ENCODE measurements at regions of chr19 and their contacts with region 1.

Region 1: GRCh38 chr19:1113033-1113985 is 9.5 kb downstream of the GPX4 start:
- DNase-seq: peak; percentile 98
- H3K4me3 ChIP-seq: peak overlapping the region in 2 of 4 donors; percentile 5 to 18
- H3K27ac ChIP-seq: peak overlapping the region; percentile 78 to 82 (median 80)
- H3K4me1 ChIP-seq: peaks cover 15 to 28% (median 26%) of the 10 kb centered on the region in 4 donors
- H3K27me3 ChIP-seq: no peaks in the 10 kb centered on the region
- CTCF ChIP-seq: peak; percentile 90 to 97 (median 93)
- EP300 ChIP-seq: no peak
- POLR2A ChIP-seq: no peak

Region 2: GRCh38 chr19:843180-843835 is 270.0 kb before region 1 on chr19:
- in situ Hi-C with region 1: no loop called
- intact Hi-C with region 1: no loop called
- DNase-seq: no peak
- H3K4me3 ChIP-seq: peak overlapping the region in 1 of 4 donors; percentile 18
- H3K27ac ChIP-seq: no peak overlapping the region
- H3K4me1 ChIP-seq: peaks cover 6 to 17% (median 11%) of the 10 kb centered on the region in 4 donors
- H3K27me3 ChIP-seq: peaks cover 94% of the 10 kb centered on the region
- CTCF ChIP-seq: peak in 1 of 5 experiments; percentile 17
- EP300 ChIP-seq: no peak
- POLR2A ChIP-seq: no peak

Region 3: DNA sequence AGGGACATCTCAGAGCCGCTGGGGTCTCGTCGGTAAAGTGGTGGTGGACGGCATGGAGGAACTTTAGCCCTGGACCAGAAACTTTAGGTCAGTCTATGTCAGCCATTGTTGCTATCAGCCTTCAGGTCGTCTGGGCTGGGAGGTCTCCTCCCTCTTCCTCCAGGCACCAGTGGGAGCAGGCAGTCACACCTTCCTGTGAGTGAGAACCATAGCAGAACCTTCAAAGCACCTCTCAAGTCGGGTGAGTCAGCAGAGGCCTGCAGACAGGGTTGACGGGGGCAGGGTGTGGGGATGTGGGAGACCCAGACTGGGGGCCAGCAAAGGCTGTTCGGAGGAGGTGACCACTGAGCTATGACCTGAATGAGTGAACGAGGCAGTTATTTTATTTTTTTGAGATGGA is 76.1 kb after region 1 on chr19:
- in situ Hi-C with region 1: loop called in 1 of 4 experiments (anchors 5 kb)
- intact Hi-C with region 1: loop called (anchors 5 kb)
- DNase-seq: no peak
- H3K4me3 ChIP-seq: no peak overlapping the region
- H3K27ac ChIP-seq: no peak overlapping the region
- H3K4me1 ChIP-seq: no peaks in the 10 kb centered on the region
- H3K27me3 ChIP-seq: no peaks in the 10 kb centered on the region
- CTCF ChIP-seq: no peak
- EP300 ChIP-seq: no peak
- POLR2A ChIP-seq: no peak

Measured in transverse colon (tissue), 4 donors.